AG04449 (cell line): ENCODE measurements at regions of chr15 and their contacts with region 1.

Region 1: GRCh38 chr15:52078876-52079700 is 33.5 kb downstream of the BCL2L10 start:
- DNase-seq: no peak
- H3K4me3 ChIP-seq: no peak overlapping the region
- CTCF ChIP-seq: peak; percentile 79

Region 2: GRCh38 chr15:51874751-51875528 is 204.1 kb before region 1 on chr15:
- CTCF ChIA-PET with region 1: no interaction called
- POLR2A ChIA-PET with region 1: no interaction called
- DNase-seq: peak; percentile 94
- H3K4me3 ChIP-seq: no peak overlapping the region
- CTCF ChIP-seq: no peak

Region 3: DNA sequence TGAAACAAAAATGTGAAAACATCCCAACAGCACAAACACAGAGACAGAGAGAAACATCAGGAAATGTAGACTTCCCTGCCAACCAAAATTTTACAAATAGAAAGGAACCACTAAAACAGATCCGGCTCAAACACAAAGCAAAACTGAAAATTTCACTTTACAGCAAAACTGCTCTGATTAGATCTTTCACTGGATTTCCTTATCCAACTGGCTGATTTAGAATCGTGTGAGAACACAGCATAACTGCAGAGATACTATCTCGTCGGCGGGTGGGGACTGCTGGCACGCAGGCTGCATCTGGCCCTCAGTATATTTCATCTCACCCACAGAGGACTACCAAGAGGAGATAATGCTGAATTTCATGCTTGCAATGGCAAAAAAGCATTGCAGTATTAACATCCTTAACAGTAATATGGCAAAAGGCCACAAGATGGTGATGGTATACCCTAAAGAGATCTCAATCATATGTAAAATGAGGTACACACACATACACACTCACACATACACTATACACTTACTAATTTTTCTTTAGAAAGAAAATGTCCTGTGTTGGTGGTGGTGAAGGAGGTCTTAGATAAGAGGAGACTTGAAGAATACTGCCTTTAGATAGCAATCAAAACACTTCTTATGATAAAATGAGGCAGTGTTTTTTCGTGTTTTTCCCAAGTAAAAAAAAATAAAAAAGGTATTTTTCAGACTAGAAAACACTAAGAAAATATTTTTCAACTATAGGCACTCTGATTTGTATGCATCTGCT is 96.9 kb before region 1 on chr15:
- CTCF ChIA-PET with region 1: interaction called, 32 read pairs
- POLR2A ChIA-PET with region 1: no interaction called
- DNase-seq: no peak
- H3K4me3 ChIP-seq: peak overlapping the region; percentile 18
- CTCF ChIP-seq: peak; percentile 39

Region 4: GRCh38 chr15:52068004-52068615 is 11.0 kb before region 1 on chr15:
- CTCF ChIA-PET with region 1: interaction called, 48 read pairs
- POLR2A ChIA-PET with region 1: no interaction called
- DNase-seq: no peak
- H3K4me3 ChIP-seq: no peak overlapping the region
- CTCF ChIP-seq: no peak

Region 5: DNA sequence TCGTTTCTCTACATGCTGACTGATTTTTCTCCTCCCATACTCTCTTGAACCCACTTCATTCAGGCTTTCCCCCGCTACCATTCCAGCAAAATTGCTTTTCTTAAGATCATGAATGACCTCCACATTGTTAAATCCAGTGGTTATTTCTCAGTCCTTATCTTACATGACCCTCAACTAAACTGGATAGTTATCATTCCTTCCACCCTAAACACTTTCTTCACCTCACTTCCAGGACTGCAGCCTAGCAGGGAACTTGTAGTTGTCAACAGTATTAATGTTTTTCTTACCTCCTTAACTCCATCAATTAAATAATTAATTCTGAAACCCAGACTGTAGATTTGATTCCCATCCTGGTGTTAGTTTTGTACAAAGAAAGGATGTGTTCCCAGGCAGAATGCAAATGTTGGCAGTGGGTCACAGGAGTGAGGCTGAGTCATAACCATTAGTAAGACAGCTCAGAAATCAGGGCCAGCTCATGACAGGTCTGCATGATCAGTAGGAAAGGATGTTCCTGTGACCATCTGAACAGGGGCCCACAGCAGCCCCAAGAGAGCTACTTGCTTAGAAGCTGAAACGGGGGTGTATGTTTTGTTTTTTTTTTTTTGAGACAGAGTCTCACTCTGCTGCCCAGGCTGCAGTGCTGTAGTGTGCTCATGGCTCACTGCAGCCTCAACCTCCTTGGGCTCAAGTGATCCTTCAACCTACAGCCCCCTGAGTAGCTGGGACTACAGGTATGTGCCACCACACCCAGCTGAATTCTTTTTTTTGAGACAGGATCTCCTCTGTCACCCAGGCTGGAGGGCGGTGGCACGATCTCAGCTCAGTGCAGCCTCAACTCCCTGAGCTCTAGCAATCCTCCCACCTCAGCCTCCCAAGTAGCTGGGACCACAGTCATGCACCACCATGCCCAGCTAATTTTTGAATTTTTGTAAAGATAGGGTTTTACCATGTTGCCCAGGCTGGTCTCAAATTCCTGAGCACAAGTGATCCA is 24.4 kb after region 1 on chr15:
- CTCF ChIA-PET with region 1: interaction called, 11 read pairs
- POLR2A ChIA-PET with region 1: no interaction called
- DNase-seq: peak; percentile 78
- H3K4me3 ChIP-seq: no peak overlapping the region
- CTCF ChIP-seq: no peak

Region 6: GRCh38 chr15:52337198-52337853 is 258.2 kb after region 1 on chr15:
- CTCF ChIA-PET with region 1: no interaction called
- POLR2A ChIA-PET with region 1: no interaction called
- DNase-seq: no peak
- H3K4me3 ChIP-seq: no peak overlapping the region
- CTCF ChIP-seq: no peak